ENCODE measurements at regions of chr11 and their contacts with region 1.

Region 1: DNA sequence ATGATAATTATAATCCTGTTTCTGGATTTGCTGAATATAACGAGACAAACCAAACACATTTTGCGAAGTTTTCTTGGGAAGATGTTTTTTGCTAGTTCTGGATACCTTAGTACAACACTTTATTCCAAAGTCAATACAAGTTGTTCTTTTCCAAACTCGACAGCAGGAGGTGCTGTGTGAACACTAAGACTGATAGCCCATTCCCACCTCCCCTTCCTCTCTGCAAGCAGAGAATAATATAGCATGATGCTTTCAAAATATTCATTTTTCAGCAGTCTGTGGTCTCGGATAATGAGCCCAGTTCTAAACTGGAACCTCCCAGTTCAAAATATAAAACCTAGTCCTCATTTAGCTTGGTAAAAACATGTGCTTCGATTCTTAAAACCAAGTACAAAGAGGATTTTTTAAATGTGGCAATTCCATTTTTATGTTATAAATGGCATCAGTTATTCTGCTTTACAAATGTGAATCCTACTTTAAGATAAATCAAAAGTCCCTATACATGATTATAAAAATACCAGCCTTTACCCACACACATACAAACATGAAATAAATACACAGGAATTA is 129.1 kb downstream of the DCDC1 start:
- DNase-seq: peak; percentile 67
- H3K4me3 Mint-ChIP-seq: no peak overlapping the region
- H3K27ac Mint-ChIP-seq: no peak overlapping the region
- H3K4me1 Mint-ChIP-seq: peaks cover 4% of the 10 kb centered on the region
- H3K27me3 Mint-ChIP-seq: peaks cover 17% of the 10 kb centered on the region
- CTCF ChIP-seq: peak; percentile 71

Region 2: DNA sequence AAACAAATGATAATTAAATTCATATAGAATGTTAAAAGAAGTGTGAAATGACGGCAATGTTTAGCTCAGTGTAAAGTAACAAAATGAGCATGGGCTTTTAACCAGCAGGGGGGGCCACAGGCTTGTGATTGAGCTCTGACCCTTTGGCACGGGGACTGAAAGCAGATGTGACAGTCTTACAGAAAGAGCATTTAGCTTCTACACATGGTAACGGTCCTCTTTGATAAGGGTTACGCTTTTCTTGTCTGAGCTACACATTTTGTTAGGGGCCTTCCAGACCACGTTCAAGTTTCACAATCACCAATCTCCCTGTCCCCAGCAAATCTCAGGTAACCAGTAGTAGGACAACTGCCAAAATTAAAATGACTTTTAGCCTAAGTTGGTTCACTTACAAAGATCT is 133.4 kb before region 1 on chr11:
- CTCF ChIA-PET with region 1: interaction called, 63 read pairs
- POLR2A ChIA-PET with region 1: no interaction called
- intact Hi-C with region 1: no loop called
- DNase-seq: peak; percentile 67
- H3K4me3 Mint-ChIP-seq: no peak overlapping the region
- H3K27ac Mint-ChIP-seq: no peak overlapping the region
- H3K4me1 Mint-ChIP-seq: no peaks in the 10 kb centered on the region
- H3K27me3 Mint-ChIP-seq: peaks cover 57% of the 10 kb centered on the region
- CTCF ChIP-seq: peak; percentile 49

Region 3: GRCh38 chr11:31369348-31370329 is 129.2 kb after region 1 on chr11 and contains the starts of genes DCDC1 and DNAJC24:
- CTCF ChIA-PET with region 1: interaction called, 4 read pairs
- POLR2A ChIA-PET with region 1: interaction called, 6 read pairs
- intact Hi-C with region 1: loop called (anchors 10 kb)
- DNase-seq: peak; percentile 89
- H3K4me3 Mint-ChIP-seq: peak within 1 kb of the TSS; percentile 85
- H3K27ac Mint-ChIP-seq: peak within 1 kb of the TSS; percentile 92
- H3K4me1 Mint-ChIP-seq: no peaks in the 10 kb centered on the region
- H3K27me3 Mint-ChIP-seq: peaks cover 32% of the 10 kb centered on the region
- CTCF ChIP-seq: no peak
- total RNA-seq, gene DCDC1: 0.19 TPM in 1 of 2 replicates, not detected in the other
- total RNA-seq, gene DNAJC24: 19.0 and 23.7 TPM in 2 replicates

Region 4: GRCh38 chr11:31487848-31488247 is 247.4 kb after region 1 on chr11:
- CTCF ChIA-PET with region 1: no interaction called
- POLR2A ChIA-PET with region 1: no interaction called
- intact Hi-C with region 1: loop called (anchors 10 kb)
- DNase-seq: peak; percentile 52
- H3K4me3 Mint-ChIP-seq: no peak overlapping the region
- H3K27ac Mint-ChIP-seq: no peak overlapping the region
- H3K4me1 Mint-ChIP-seq: peaks cover 11% of the 10 kb centered on the region
- H3K27me3 Mint-ChIP-seq: no peaks in the 10 kb centered on the region
- CTCF ChIP-seq: peak; percentile 43

Region 5: DNA sequence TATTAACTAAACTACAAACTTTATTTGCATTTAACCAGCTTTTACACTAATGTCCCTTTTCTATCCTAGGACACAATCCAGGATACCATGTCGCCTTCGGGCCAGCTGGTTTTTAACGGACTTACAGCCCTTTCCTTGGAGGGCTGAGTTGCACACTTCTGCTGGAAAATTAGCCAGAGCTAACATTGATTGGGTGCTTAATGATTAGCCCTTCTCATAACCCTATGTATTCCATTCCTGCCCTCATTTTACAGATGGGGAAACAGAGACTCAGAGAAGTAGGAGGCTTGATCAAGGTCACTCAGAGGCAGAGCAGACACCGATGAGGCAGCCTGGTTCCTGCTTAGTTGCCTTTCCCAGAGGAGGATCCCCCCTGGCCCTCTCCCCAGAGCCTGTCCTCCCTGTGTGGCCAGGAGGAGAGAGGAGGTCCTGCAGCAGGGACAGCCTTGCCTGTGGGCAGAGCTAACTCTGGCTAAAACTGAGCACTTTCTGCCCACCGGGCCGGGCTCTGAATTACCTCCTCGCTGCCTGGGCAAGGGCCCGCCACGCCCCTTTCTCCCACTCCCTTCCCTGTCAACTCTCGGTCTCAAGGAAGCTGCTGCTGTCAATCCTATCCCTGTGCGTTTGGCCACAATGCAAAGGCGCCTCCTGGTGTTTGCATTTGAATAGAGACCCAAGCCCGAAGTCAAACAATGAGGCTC is 630.3 kb after region 1 on chr11:
- CTCF ChIA-PET with region 1: interaction called, 28 read pairs
- POLR2A ChIA-PET with region 1: no interaction called
- intact Hi-C with region 1: loop called (anchors 1 kb)
- DNase-seq: peak; percentile 66
- H3K4me3 Mint-ChIP-seq: no peak overlapping the region
- H3K27ac Mint-ChIP-seq: no peak overlapping the region
- H3K4me1 Mint-ChIP-seq: no peaks in the 10 kb centered on the region
- H3K27me3 Mint-ChIP-seq: peaks cover 11% of the 10 kb centered on the region
- CTCF ChIP-seq: peak; percentile 68

Region 6: GRCh38 chr11:32297611-32298011 is 1057.2 kb after region 1 on chr11:
- CTCF ChIA-PET with region 1: interaction called, 10 read pairs
- POLR2A ChIA-PET with region 1: no interaction called
- intact Hi-C with region 1: loop called (anchors 2 kb)
- DNase-seq: peak; percentile 50
- H3K4me3 Mint-ChIP-seq: no peak overlapping the region
- H3K27ac Mint-ChIP-seq: no peak overlapping the region
- H3K4me1 Mint-ChIP-seq: no peaks in the 10 kb centered on the region
- H3K27me3 Mint-ChIP-seq: no peaks in the 10 kb centered on the region
- CTCF ChIP-seq: peak; percentile 39

Measured in MCF 10A (cell line).